ENCODE measurements at regions of chr12 and their contacts with region 1.

Region 1: GRCh38 chr12:76259660-76260389 is 88.4 kb downstream of the BBS10 start:
- DNase-seq: peak; percentile 83
- H3K4me3 ChIP-seq: peak overlapping the region; percentile 20 to 43 (median 31)
- H3K27ac ChIP-seq: peak overlapping the region; percentile 68
- H3K4me1 ChIP-seq: peaks cover 26% of the 10 kb centered on the region
- H3K27me3 ChIP-seq: no peaks in the 10 kb centered on the region
- CTCF ChIP-seq: no peak

Region 2: GRCh38 chr12:76236611-76237010 is 23.2 kb before region 1 on chr12:
- CTCF ChIA-PET with region 1: no interaction called
- dilution Hi-C with region 1: no loop called
- in situ Hi-C with region 1: no loop called
- intact Hi-C with region 1: loop called (anchors 2 kb)
- DNase-seq: peak; percentile 95
- H3K4me3 ChIP-seq: no peak overlapping the region
- H3K27ac ChIP-seq: peak overlapping the region; percentile 66
- H3K4me1 ChIP-seq: peaks cover 34% of the 10 kb centered on the region
- H3K27me3 ChIP-seq: no peaks in the 10 kb centered on the region
- CTCF ChIP-seq: no peak